Prostate gland (tissue), 2 donors: ENCODE measurements at regions of chr22 and their contacts with region 1.

Region 1: GRCh38 chr22:38569972-38570778 is at the start of gene DMC1:
- DNase-seq: peak; percentile 93
- H3K4me3 ChIP-seq: peak within 1 kb of the TSS; percentile 53 to 54
- H3K27ac ChIP-seq: peak within 1 kb of the TSS; percentile 76 to 82
- H3K4me1 ChIP-seq: no peaks in the 10 kb centered on the region
- H3K27me3 ChIP-seq: no peaks in the 10 kb centered on the region
- CTCF ChIP-seq: no peak
- POLR2A ChIP-seq: peak; percentile 54
- total RNA-seq, gene DMC1: 0.23 to 3.2 TPM

Region 2: GRCh38 chr22:38051900-38052862 is 518.0 kb before region 1 on chr22:
- intact Hi-C with region 1: loop called (anchors 5 kb)
- DNase-seq: peak; percentile 79
- H3K4me3 ChIP-seq: no peak overlapping the region
- H3K27ac ChIP-seq: no peak overlapping the region
- H3K4me1 ChIP-seq: no peaks in the 10 kb centered on the region
- H3K27me3 ChIP-seq: no peaks in the 10 kb centered on the region
- CTCF ChIP-seq: peak; percentile 76 to 96 (median 88)
- POLR2A ChIP-seq: no peak

Region 3: DNA sequence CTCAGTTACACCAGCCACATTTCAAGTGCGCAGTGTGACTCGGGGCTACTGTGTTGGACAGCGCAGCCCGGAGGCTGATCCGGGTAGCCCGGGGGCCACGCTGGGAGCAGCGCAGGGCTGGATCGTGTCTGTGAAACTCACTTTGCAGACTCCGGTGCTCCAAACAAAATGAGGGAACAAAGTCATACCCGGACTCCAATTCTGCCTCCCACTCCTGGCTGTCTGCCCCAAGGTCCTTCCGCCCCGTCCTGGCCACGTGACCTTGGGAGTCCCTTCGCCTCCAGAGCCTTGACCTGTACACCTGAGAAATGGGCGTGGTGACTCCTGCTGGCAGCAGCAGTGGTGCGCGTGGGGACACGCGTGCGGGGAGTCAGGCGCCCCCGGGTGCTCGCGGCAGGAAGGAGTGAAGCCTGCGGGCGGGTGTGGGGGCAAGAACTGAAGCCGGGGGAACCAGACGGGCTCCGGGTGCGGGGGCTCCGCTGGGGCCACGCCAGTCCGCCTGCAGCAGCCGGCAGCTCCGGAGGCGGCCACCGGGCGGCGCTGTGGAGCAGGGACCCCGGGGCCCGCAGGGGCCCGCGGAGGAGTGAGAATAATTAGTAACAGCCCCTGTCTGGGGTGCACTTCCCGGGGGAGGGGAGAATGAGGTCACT is 157.6 kb before region 1 on chr22:
- intact Hi-C with region 1: loop called (anchors 5 kb)
- DNase-seq: no peak
- H3K4me3 ChIP-seq: peak overlapping the region in 1 of 2 donors; percentile 11
- H3K27ac ChIP-seq: no peak overlapping the region
- H3K4me1 ChIP-seq: peaks cover 6% of the 10 kb centered on the region
- H3K27me3 ChIP-seq: no peaks in the 10 kb centered on the region
- CTCF ChIP-seq: peak; percentile 51 to 67 (median 60)
- POLR2A ChIP-seq: no peak

Region 4: DNA sequence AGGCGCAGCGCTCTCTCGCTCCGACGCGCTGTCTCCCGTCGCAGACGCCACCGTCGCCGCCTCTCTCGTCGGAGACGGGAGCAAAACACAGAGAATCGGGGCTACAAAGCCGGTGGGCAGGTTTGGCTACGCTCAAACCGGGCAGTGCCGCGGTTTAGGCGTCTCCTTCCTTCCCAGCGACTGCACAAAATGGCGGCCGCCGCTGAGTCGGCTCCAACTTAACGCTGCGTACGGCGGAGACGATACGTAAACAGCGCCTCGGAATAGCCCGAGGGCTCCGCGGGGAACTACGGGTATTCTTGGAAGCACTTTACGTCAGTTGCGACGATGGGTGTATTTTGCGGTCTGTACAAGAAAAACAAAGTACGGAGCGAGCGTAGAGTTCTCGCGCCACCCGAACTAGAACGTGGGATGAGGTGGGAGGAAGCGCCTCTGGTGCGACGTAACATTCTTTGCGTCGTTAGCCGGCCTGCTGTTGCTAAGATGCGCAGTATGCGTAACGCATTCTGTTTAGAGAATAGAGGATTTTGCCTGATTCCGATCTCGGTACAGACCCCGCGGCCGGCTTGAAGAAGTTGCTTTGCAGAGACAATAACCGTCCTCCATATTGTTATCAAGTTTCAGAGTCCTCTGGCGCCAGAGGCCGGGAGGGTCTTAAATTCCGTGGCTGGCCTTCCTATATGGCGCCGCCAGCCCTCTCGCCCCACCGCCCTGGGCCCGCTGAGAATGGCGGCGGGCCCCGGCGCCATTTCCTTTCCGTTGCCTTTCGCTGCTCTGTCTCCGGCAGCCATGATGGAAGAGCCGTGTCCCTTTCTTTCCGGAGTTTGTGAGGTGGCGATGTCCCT is 63.8 kb before region 1 on chr22 and contains the start of gene DDX17:
- intact Hi-C with region 1: loop called (anchors 2 kb)
- DNase-seq: peak; percentile 96
- H3K4me3 ChIP-seq: peak within 1 kb of the TSS; percentile 87 to 88
- H3K27ac ChIP-seq: peak within 1 kb of the TSS; percentile 100
- H3K4me1 ChIP-seq: no peaks in the 10 kb centered on the region
- H3K27me3 ChIP-seq: no peaks in the 10 kb centered on the region
- CTCF ChIP-seq: peak in 2 of 4 experiments; percentile 18 to 25
- POLR2A ChIP-seq: peak; percentile 65
- total RNA-seq, gene DDX17: 374 to 600 TPM

Region 5: GRCh38 chr22:38652859-38653258 is 82.7 kb after region 1 on chr22:
- intact Hi-C with region 1: no loop called
- DNase-seq: no peak
- H3K4me3 ChIP-seq: no peak overlapping the region
- H3K27ac ChIP-seq: no peak overlapping the region
- H3K4me1 ChIP-seq: peaks cover 6% of the 10 kb centered on the region
- H3K27me3 ChIP-seq: no peaks in the 10 kb centered on the region
- CTCF ChIP-seq: no peak
- POLR2A ChIP-seq: no peak